Activated CD4-positive, alpha-beta memory T cell treated with anti-CD3 and anti-CD28 coated beads, Interleukin-2, amount 10 ng/mL, durations not matched to agents 7 days and 5 days (primary cell): ENCODE measurements at regions of chr4 and their contacts with region 1.

Region 1: DNA sequence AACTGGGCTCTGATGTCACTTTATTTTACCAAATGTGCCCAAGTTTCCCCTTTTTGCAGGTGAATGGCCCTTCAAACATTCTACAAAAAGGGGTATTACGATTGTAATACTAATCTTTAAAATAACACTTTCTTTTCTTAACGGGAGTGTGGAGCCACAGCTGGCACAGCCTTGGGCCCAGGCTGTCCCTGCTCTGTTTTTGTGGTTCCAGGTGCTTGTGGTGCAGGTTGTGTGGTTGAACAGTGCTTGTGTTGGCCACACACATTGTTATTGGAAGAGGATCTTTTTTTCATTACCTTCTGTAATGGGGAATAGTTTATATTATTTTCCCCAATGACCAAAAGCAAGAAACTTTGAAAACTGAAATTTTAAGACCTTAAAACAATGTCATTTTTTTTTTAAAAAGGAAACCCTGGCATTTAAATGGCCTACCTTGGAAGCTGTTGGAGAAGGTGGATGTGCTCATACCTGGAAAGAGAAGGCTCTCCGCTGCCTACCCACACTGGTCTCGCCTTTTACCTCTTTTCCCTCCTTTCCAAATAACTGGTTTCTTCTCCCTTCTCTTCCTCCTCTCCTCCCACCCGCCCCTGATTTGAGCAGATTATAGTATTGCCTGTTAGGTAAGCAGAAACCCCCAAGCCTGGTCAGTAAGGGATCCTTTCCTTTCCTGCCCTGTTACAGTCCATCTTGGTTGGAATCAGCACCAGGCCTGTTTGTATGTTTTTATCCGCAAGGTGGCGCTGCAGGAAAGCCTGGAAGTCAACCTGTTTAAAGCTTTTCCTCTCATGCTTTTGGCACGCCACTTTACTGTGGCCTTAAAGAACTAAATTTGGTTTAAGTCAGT is 28.6 kb downstream of the HADH start:
- DNase-seq: peak; percentile 83
- H3K4me3 Mint-ChIP-seq: no peak overlapping the region
- H3K27ac Mint-ChIP-seq: no peak overlapping the region
- H3K4me1 Mint-ChIP-seq: no peaks in the 10 kb centered on the region
- H3K27me3 Mint-ChIP-seq: no peaks in the 10 kb centered on the region

Region 2: DNA sequence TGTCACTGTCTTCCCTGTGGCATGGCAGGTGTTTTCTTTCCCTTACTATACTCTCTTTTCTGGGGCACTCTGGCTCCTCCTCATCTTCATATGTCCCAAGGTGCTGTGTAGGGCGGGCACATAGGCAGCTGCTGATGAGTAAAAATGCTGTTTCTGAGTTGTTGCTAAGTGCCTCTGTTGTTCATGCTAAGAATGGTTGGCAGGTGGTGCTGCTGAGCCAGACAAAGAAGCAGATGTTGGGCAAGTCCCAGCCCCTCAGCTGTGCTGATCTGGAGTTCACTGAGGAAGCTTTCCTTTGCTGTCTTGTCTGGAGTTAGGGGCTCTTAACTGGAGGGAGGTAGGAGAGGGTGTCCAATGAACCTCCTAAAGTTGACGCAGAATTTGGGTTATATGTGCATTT is 12.1 kb after region 1 on chr4:
- CTCF ChIA-PET with region 1: interaction called, 22 read pairs
- POLR2A ChIA-PET with region 1: interaction called, 3 read pairs
- DNase-seq: peak; percentile 71
- H3K4me3 Mint-ChIP-seq: no peak overlapping the region
- H3K27ac Mint-ChIP-seq: peak overlapping the region; percentile 19
- H3K4me1 Mint-ChIP-seq: peaks cover 25% of the 10 kb centered on the region
- H3K27me3 Mint-ChIP-seq: no peaks in the 10 kb centered on the region

Region 3: DNA sequence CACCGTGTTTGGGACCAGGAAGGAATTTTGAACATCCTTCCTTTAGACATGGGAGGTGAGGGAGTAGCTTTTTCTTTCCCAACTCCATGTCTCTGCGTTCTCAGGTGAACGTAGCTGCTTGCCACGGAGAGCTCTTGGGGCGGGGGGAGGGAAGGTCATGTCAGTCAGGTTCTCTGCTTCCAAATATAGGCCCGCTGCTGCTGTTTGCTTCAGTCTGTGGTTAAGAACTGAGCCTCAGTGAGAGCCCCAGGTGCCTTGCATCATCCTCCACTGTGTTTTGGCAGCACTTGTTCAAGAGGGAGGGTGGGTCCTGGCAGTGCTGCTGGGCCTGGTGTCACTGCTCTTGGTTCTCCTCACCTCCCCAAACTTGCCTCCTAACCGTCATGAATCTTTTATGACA is 18.0 kb after region 1 on chr4:
- CTCF ChIA-PET with region 1: interaction called, 22 read pairs
- POLR2A ChIA-PET with region 1: no interaction called
- DNase-seq: peak; percentile 49
- H3K4me3 Mint-ChIP-seq: no peak overlapping the region
- H3K27ac Mint-ChIP-seq: peak overlapping the region; percentile 61
- H3K4me1 Mint-ChIP-seq: peaks cover 13% of the 10 kb centered on the region
- H3K27me3 Mint-ChIP-seq: no peaks in the 10 kb centered on the region

Region 4: GRCh38 chr4:108160741-108161352 is 142.6 kb after region 1 on chr4:
- CTCF ChIA-PET with region 1: interaction called, 10 read pairs
- POLR2A ChIA-PET with region 1: no interaction called
- DNase-seq: no peak
- H3K4me3 Mint-ChIP-seq: peak overlapping the region; percentile 52
- H3K27ac Mint-ChIP-seq: peak overlapping the region; percentile 56
- H3K4me1 Mint-ChIP-seq: peaks cover 71% of the 10 kb centered on the region
- H3K27me3 Mint-ChIP-seq: peaks cover 7% of the 10 kb centered on the region

Region 5: GRCh38 chr4:108492816-108493595 is 474.7 kb after region 1 on chr4:
- CTCF ChIA-PET with region 1: interaction called, 31 read pairs
- POLR2A ChIA-PET with region 1: interaction called, 4 read pairs
- DNase-seq: peak; percentile 38
- H3K4me3 Mint-ChIP-seq: no peak overlapping the region
- H3K27ac Mint-ChIP-seq: no peak overlapping the region
- H3K4me1 Mint-ChIP-seq: no peaks in the 10 kb centered on the region
- H3K27me3 Mint-ChIP-seq: peaks cover 7% of the 10 kb centered on the region

Region 6: GRCh38 chr4:108570993-108571569 is 552.8 kb after region 1 on chr4:
- CTCF ChIA-PET with region 1: interaction called, 52 read pairs
- POLR2A ChIA-PET with region 1: interaction called, 3 read pairs
- DNase-seq: no peak
- H3K4me3 Mint-ChIP-seq: no peak overlapping the region
- H3K27ac Mint-ChIP-seq: no peak overlapping the region
- H3K4me1 Mint-ChIP-seq: peaks cover 5% of the 10 kb centered on the region
- H3K27me3 Mint-ChIP-seq: no peaks in the 10 kb centered on the region